Posterior cingulate gyrus (tissue), 11 donors: ENCODE measurements at regions of chr12 and their contacts with region 1.

Region 1: DNA sequence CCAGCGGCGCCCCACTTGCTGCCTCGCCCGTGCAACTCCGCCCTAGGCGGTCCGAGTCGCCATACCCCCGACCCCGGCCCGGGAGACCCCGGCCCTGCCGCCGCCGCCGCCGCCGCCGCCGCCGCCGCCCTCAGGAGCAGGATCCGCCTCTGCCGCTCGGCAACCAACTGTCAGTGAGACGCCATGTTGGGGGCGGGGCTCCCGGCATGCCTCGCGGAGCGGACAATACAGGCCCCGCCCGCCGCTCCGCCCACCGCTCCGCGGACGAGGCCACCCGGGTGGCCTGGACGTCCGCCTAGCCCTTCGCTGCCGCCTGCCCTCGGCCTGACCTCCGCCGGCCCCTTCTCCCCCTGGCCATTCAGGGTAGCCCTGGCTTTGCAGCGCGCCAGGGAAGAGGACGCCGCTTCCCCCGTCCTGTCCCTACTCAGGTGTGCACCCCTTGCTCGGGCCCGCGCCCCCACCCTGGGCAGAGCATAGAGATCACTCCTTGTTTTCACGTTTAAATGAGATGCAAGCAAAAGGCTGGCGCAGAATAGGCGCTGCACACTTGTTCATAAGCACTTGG is at the start of gene HECTD4:
- DNase-seq: peak; percentile 92 to 99 (median 98)

Region 2: GRCh38 chr12:111943929-111944328 is 438.4 kb before region 1 on chr12:
- intact Hi-C with region 1: loop called (anchors 2 kb)
- DNase-seq: no peak

Region 3: GRCh38 chr12:112012775-112013600 is 369.3 kb before region 1 on chr12 and contains the starts of genes ERP29 and TMEM116:
- intact Hi-C with region 1: loop called (anchors 5 kb)
- DNase-seq: peak; percentile 99 to 100 (median 100)

Region 4: DNA sequence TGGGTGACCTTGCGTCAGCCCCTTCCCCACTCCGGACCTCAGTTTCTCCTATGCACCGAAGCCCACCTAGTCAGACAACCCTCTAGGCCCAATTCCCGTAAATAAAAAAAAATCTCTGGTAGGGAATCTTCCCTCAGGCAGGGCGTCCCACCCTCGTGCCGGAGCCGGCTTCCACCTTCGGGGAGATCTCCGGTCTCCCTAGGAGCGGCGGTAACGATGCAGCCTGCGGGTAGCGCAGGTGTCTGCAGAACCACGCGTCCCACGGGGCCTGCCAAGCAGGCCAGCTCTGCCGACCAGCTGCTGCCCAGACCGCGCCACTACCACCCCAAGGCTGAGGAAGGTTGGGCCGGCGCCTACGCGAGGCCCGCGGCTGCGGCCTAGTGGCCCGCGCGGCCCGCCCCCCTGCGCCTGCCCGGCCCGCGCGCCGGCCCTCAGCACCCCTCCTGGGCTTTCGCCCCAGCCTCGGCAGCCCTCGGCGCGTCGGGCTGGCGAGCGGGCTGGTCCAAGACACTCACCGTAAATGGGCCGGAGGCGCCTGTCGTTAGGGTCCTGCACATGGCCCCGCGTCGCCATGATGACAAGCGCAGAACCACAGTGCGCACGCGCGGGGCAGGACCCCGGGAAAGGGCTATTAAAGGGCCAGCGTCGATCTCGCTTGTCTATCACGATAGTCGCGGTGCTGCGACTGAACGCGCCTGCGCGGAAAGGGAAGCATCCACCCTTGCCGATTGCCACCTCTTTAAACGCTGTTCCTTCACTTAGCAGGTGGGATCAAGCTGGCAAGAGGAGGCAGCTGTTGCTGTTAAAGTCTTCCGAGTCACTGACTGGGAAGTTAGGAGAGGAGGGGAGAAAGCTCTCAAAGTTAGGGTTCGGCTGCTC is 273.9 kb before region 1 on chr12 and contains the start of gene NAA25:
- intact Hi-C with region 1: loop called (anchors 5 kb)
- DNase-seq: peak; percentile 81 to 98 (median 88)

Region 5: GRCh38 chr12:112125250-112125999 is 256.9 kb before region 1 on chr12 and contains the start of gene TRAFD1:
- intact Hi-C with region 1: loop called (anchors 5 kb)
- DNase-seq: peak; percentile 98 to 100 (median 98)

Region 6: GRCh38 chr12:112183141-112184021 is 198.9 kb before region 1 on chr12:
- intact Hi-C with region 1: loop called (anchors 5 kb)
- DNase-seq: no peak

Region 7: DNA sequence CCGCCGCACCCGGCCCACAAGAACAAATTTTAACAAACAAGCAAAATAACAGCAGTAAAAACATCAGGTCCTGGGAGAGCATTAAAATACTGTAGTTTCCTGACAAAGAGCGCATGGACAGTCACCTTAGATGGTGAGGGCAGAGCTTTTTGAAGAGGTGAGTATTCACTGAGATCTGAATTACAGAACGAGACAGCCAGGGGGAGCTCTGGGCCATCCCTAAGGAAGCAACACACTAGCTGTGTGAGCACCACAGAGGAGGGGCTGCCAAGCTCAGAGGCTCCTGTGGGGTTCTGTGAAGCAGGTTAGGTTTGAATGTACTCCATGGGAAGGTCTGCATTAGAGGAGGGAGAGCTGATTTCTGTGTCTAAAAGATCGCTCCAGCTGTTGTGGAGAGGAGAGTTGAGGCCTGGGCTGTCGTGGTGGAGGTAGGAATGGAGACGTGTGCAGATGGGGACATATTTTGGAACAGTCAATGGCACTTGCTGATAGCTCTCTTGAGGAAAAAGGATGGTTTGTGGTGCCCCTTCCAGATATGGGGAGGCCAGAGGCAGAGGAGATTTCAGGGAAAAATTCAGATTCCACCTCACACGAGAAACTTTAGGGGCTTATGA is 184.1 kb before region 1 on chr12:
- intact Hi-C with region 1: loop called (anchors 5 kb)
- DNase-seq: peak in 7 of 10 donors; percentile 47 to 94 (median 66)

Region 8: DNA sequence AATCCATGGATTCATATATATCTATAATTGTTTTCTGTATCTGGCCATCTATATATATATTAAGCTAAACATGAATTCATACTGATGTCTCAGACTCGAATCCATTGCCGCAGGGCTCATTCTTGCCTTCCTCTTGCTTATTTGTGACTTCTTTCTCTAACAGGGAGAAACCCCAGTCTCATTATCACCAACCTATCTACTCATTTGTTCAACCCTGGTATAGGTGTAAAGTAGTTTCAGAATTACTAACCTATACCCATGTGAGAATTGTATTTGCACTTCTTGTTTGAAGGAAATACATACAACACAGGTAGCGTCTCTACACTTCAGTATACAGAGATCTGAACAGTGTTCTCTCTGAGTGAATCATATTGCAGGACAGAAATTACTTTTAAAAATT is 114.2 kb after region 1 on chr12:
- intact Hi-C with region 1: no loop called
- DNase-seq: no peak